ENCODE measurements at regions of chr5 and their contacts with region 1.

Region 1: DNA sequence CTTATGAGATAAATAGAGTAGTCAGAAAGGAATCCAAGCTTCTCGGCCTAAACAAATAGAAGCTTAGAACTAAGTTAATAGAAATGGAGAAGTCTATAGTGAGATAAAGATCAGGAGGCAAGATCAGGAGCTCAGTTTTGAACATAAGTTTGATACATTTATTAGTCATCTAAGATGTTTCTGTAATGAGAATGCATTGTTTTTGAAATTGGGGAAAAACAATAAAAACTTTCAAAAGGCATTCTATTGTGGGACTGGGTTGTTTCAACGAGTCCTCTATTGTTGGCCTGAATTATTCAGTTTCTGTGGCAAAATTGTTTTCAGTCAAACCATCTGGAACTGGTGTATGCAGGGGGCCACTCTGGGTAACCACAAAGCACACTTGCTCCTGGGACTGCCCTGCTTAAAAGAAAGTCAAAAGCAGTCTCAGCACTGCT is 181.0 kb upstream of the CLINT1 start:
- DNase-seq: no peak
- ATAC-seq: no peak
- H3K4me3 ChIP-seq: no peak overlapping the region
- H3K27ac ChIP-seq: no peak overlapping the region
- H3K4me1 ChIP-seq: no peaks in the 10 kb centered on the region
- H3K27me3 ChIP-seq: no peaks in the 10 kb centered on the region
- CTCF ChIP-seq: no peak

Region 2: DNA sequence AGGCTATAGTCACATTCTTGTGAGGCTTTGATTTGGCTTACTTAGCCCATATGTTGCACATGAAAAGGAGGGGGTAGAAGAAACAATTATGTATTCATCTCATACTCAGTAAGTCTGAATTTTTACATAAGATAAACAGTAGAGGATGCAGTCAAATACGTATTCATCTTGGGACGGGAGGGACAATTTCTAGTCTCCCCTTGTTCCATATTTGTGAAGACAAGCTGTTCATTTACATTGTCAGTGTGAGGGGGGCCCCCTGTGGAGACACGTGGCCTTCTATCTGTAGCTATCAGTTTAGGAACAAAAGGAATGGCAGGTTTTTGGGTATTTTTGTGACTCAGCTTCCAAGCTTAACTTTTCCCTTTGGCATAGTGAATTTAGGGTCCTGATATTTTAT is 1239.0 kb before region 1 on chr5:
- CTCF ChIA-PET with region 1: no interaction called
- POLR2A ChIA-PET with region 1: interaction called, 11 read pairs
- in situ Hi-C with region 1: no loop called
- intact Hi-C with region 1: no loop called
- DNase-seq: no peak
- ATAC-seq: no peak
- H3K4me3 ChIP-seq: no peak overlapping the region
- H3K27ac ChIP-seq: no peak overlapping the region
- H3K4me1 ChIP-seq: no peaks in the 10 kb centered on the region
- H3K27me3 ChIP-seq: no peaks in the 10 kb centered on the region
- CTCF ChIP-seq: no peak

Region 3: DNA sequence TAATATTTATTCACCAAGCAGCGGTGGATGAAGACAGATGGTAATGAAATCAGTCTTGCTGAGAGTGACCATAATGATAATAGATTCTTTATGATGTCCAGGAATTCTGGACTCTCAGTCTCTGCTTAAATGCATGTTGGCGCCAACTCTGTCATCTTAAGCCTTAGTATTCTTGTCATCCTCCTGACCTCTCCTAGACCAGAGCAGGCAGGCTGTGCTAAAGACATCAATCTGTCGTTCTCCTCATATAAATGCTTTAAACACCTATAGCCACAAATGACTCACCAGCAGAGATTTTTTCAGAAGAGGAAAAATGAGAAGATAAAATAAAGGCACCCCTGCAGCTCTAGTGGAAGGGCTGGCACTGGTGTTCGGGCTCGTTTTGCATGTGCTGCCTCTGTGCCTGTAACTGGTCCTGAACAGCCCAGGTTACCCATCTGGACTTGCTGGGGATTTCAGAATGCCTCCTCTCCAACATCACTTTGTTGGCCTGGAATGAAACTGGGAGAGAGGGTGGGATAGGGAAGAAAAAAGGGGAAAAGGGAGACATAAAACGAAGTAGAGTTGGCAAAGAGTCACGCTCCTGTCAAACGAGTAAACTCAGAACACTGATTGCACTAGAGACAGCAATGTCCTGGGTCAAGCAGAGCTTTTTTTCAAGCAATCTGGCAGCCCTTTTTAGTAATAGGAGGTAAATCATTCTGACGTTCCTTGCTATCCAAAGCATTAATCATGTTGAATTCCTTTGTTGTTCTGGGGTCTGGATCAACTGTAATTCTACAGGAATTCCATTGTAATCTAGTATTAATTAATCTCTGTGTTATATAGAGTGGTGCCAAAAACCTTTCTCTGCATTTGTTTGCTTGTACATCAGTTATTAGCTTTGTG is 14.5 kb after region 1 on chr5:
- CTCF ChIA-PET with region 1: no interaction called
- POLR2A ChIA-PET with region 1: no interaction called
- in situ Hi-C with region 1: no loop called
- intact Hi-C with region 1: no loop called
- DNase-seq: no peak
- ATAC-seq: no peak
- H3K4me3 ChIP-seq: no peak overlapping the region
- H3K27ac ChIP-seq: no peak overlapping the region
- H3K4me1 ChIP-seq: no peaks in the 10 kb centered on the region
- H3K27me3 ChIP-seq: peaks cover 4% of the 10 kb centered on the region; the same call in 1 of the 2 replicates
- CTCF ChIP-seq: no peak

Region 4: GRCh38 chr5:158398360-158399201 is 358.7 kb after region 1 on chr5:
- CTCF ChIA-PET with region 1: no interaction called
- POLR2A ChIA-PET with region 1: no interaction called
- in situ Hi-C with region 1: no loop called
- intact Hi-C with region 1: no loop called
- DNase-seq: no peak
- ATAC-seq: no peak
- H3K4me3 ChIP-seq: no peak overlapping the region
- H3K27ac ChIP-seq: no peak overlapping the region
- H3K4me1 ChIP-seq: no peaks in the 10 kb centered on the region
- H3K27me3 ChIP-seq: no peaks in the 10 kb centered on the region
- CTCF ChIP-seq: no peak